ENCODE measurements at regions of chr17 and their contacts with region 1.

Region 1: GRCh38 chr17:82126556-82127314 is 28.7 kb upstream of the FASN start:
- DNase-seq: peak; percentile 51 to 99 (median 98)
- ATAC-seq: peak; percentile 92
- H3K4me3 ChIP-seq: peak overlapping the region; percentile 36
- H3K4me3 Mint-ChIP-seq: peak overlapping the region; percentile 71 to 87 (median 84)
- H3K27ac ChIP-seq: peak overlapping the region; percentile 97
- H3K27ac Mint-ChIP-seq: peak overlapping the region; percentile 93 to 100 (median 98)
- H3K4me1 ChIP-seq: peaks cover 36 to 78% of the 10 kb centered on the region in 2 donors
- H3K4me1 Mint-ChIP-seq: peaks cover 33 to 83% (median 65%) of the 10 kb centered on the region in 7 donors
- H3K27me3 ChIP-seq: no peaks in the 10 kb centered on the region
- H3K27me3 Mint-ChIP-seq: no peaks in the 10 kb centered on the region

Region 2: GRCh38 chr17:82030470-82031302 is 96.0 kb before region 1 on chr17:
- CTCF ChIA-PET with region 1: interaction called, 12 read pairs
- POLR2A ChIA-PET with region 1: interaction called, 7 read pairs
- intact Hi-C with region 1: loop called in 1 of 2 experiments (anchors 1 kb)
- DNase-seq: peak; percentile 73 to 92 (median 86)
- ATAC-seq: peak; percentile 94
- H3K4me3 ChIP-seq: peak overlapping the region; percentile 60
- H3K4me3 Mint-ChIP-seq: peak overlapping the region; percentile 77 to 91 (median 86)
- H3K27ac ChIP-seq: peak overlapping the region; percentile 48
- H3K27ac Mint-ChIP-seq: peak overlapping the region in 6 of 9 donors; percentile 36 to 85 (median 65)
- H3K4me1 ChIP-seq: peaks cover 7 to 12% of the 10 kb centered on the region in 2 donors
- H3K4me1 Mint-ChIP-seq: peaks cover 10 to 16% (median 16%) of the 10 kb centered on the region in 7 donors
- H3K27me3 ChIP-seq: no peaks in the 10 kb centered on the region
- H3K27me3 Mint-ChIP-seq: no peaks in the 10 kb centered on the region

Region 3: GRCh38 chr17:82077617-82078358 is 48.9 kb before region 1 on chr17:
- CTCF ChIA-PET with region 1: no interaction called
- POLR2A ChIA-PET with region 1: no interaction called
- intact Hi-C with region 1: no loop called
- DNase-seq: no peak
- ATAC-seq: no peak
- H3K4me3 ChIP-seq: no peak overlapping the region
- H3K4me3 Mint-ChIP-seq: no peak overlapping the region
- H3K27ac ChIP-seq: no peak overlapping the region
- H3K27ac Mint-ChIP-seq: no peak overlapping the region
- H3K4me1 ChIP-seq: no peaks in the 10 kb centered on the region
- H3K4me1 Mint-ChIP-seq: no peaks in the 10 kb centered on the region
- H3K27me3 ChIP-seq: no peaks in the 10 kb centered on the region
- H3K27me3 Mint-ChIP-seq: peaks cover 0 to 4% (median 0%) of the 10 kb centered on the region in 5 donors

Region 4: GRCh38 chr17:82105882-82106687 is 20.6 kb before region 1 on chr17:
- CTCF ChIA-PET with region 1: interaction called, 14 read pairs
- POLR2A ChIA-PET with region 1: interaction called, 45 read pairs
- intact Hi-C with region 1: loop called (anchors 1 to 2 kb)
- DNase-seq: peak; percentile 14 to 69 (median 56)
- ATAC-seq: peak; percentile 89
- H3K4me3 ChIP-seq: peak overlapping the region; percentile 73
- H3K4me3 Mint-ChIP-seq: peak overlapping the region; percentile 87 to 94 (median 90)
- H3K27ac ChIP-seq: peak overlapping the region; percentile 89
- H3K27ac Mint-ChIP-seq: peak overlapping the region; percentile 95 to 99 (median 97)
- H3K4me1 ChIP-seq: peaks cover 17 to 25% of the 10 kb centered on the region in 2 donors
- H3K4me1 Mint-ChIP-seq: peaks cover 18 to 44% (median 32%) of the 10 kb centered on the region in 7 donors
- H3K27me3 ChIP-seq: no peaks in the 10 kb centered on the region
- H3K27me3 Mint-ChIP-seq: no peaks in the 10 kb centered on the region

Region 5: GRCh38 chr17:82205719-82206508 is 79.2 kb after region 1 on chr17:
- CTCF ChIA-PET with region 1: no interaction called
- POLR2A ChIA-PET with region 1: interaction called, 11 read pairs
- intact Hi-C with region 1: loop called (anchors 2 to 10 kb)
- DNase-seq: peak; percentile 67 to 87 (median 82)
- ATAC-seq: peak; percentile 88
- H3K4me3 ChIP-seq: no peak overlapping the region
- H3K4me3 Mint-ChIP-seq: peak overlapping the region in 9 of 10 donors; percentile 45 to 71 (median 58)
- H3K27ac ChIP-seq: peak overlapping the region; percentile 64
- H3K27ac Mint-ChIP-seq: peak overlapping the region; percentile 87 to 98 (median 95)
- H3K4me1 ChIP-seq: peaks cover 14 to 22% of the 10 kb centered on the region in 2 donors
- H3K4me1 Mint-ChIP-seq: peaks cover 24 to 61% (median 43%) of the 10 kb centered on the region in 7 donors
- H3K27me3 ChIP-seq: no peaks in the 10 kb centered on the region
- H3K27me3 Mint-ChIP-seq: no peaks in the 10 kb centered on the region

Region 6: DNA sequence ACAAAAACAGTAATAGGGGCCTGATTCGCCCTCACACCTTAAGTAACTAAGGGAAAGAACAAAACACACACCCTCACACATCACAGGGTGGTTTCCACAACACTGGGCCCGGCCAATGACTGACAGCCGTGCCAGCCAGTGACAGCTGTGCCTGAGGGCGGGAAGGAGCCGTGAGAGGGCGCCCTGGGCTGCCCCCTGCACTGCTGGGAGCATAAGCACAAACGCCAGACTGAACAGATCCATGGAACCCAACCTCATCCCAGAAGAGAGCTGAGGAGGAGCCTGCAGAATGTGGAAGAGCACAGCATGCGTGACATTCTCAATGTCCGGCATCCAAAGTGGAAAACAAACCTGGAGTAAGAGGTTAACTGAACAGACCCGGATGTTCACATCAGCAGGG is 130.7 kb after region 1 on chr17:
- CTCF ChIA-PET with region 1: no interaction called
- POLR2A ChIA-PET with region 1: no interaction called
- intact Hi-C with region 1: no loop called
- DNase-seq: peak in 3 of 9 donors; percentile 40 to 56 (median 45)
- ATAC-seq: peak; percentile 91
- H3K4me3 ChIP-seq: no peak overlapping the region
- H3K4me3 Mint-ChIP-seq: peak overlapping the region in 3 of 10 donors; percentile 11 to 49 (median 36)
- H3K27ac ChIP-seq: peak overlapping the region; percentile 34
- H3K27ac Mint-ChIP-seq: peak overlapping the region; percentile 44 to 90 (median 79)
- H3K4me1 ChIP-seq: no peaks in the 10 kb centered on the region
- H3K4me1 Mint-ChIP-seq: peaks cover 14 to 51% (median 33%) of the 10 kb centered on the region in 7 donors
- H3K27me3 ChIP-seq: no peaks in the 10 kb centered on the region
- H3K27me3 Mint-ChIP-seq: no peaks in the 10 kb centered on the region

Region 7: DNA sequence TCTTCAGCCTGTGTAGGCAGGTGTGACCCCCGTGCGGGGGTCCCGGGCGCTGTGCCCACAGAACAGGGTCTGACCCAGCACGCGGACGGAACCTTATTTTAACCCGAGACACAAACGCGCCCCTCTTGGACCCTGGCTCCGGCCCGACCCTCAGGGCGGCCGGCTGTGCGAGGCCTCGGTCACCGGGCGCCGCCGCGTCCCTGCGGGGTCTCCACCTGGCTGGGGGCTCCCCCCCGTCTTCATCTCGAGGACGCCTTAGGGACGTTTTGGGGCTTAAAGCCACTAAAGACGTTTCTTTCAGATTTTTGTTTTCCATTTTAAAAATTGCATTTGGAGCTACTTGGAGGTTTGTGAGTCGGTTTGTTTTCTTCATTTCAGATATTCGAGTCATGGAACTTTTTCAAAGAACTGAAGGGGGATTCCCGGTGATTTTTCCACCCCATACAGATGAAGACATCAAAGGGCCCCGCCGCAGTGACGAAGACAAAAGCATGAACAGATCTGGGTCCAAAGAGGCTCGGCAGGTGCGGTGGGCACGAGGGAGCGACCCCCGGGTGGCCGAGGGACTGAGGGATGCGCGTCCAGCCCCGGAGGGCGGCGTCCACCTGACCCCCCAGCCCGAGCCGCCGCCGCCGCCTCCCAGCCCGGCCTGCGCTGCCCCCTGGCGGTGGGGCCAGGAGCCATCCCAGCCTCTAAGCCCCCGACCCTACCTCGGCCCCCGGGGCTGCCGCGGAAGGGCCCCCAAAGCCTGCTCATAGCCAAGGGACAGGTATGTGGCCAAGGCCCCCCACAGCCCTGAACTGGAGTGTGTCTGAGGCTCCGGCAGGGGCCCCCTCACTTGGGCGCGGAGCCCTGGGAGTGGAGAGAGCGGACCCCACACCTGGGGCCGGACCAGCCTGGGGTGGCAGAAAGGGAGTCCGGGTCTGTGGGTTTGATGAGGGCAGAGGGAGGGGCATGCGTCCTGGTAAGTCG is 194.5 kb after region 1 on chr17:
- CTCF ChIA-PET with region 1: no interaction called
- POLR2A ChIA-PET with region 1: interaction called, 4 read pairs
- intact Hi-C with region 1: loop called in 1 of 2 experiments (anchors 2 kb)
- DNase-seq: peak; percentile 70 to 95 (median 80)
- ATAC-seq: peak; percentile 69
- H3K4me3 ChIP-seq: peak overlapping the region; percentile 46
- H3K4me3 Mint-ChIP-seq: peak overlapping the region; percentile 58 to 87 (median 82)
- H3K27ac ChIP-seq: peak overlapping the region; percentile 77
- H3K27ac Mint-ChIP-seq: peak overlapping the region; percentile 75 to 97 (median 93)
- H3K4me1 ChIP-seq: peaks cover 13 to 20% of the 10 kb centered on the region in 2 donors
- H3K4me1 Mint-ChIP-seq: peaks cover 0 to 31% (median 16%) of the 10 kb centered on the region in 7 donors
- H3K27me3 ChIP-seq: no peaks in the 10 kb centered on the region
- H3K27me3 Mint-ChIP-seq: no peaks in the 10 kb centered on the region